ENCODE measurements at regions of chr19 and their contacts with region 1.

Region 1: DNA sequence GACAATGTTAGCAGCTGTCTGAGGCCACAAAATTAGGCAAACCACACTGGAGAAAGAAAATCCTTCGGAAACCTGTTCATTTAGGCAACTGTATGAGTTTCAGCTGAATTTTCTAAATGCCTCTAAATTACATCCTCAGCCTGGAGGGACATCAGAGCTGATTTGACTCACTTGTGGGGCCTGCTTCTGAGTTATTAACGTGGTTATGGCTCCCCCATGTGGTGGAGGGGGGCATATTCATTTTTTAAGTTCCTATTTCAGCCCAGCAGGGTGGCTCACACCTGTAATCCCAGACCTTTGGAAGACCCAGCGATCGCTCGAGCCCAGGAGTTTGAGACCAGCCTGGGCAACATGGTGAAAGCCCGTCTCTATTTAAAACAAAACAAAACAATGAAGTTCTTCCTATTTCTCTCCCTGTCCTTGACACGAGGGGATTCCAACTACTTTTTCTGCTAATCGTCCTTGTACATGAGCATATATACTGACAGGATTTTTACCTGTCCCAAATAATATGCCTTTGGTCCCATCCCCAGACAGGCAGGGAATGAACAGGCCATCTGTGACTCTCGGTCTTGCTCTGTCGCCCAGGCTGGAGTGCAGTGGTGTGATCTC is 31.5 kb upstream of the HIF3A start:
- DNase-seq: peak; percentile 78
- H3K4me3 ChIP-seq: peak overlapping the region in 1 of 2 experiments; percentile 7; a peak in 1 of 4 replicates
- H3K27ac ChIP-seq: no peak overlapping the region
- H3K4me1 ChIP-seq: no peaks in the 10 kb centered on the region
- H3K27me3 ChIP-seq: peaks cover 30% of the 10 kb centered on the region
- CTCF ChIP-seq: peak; percentile 87
- EP300 ChIP-seq: no peak
- RAD21 ChIP-seq: peak; percentile 90

Region 2: DNA sequence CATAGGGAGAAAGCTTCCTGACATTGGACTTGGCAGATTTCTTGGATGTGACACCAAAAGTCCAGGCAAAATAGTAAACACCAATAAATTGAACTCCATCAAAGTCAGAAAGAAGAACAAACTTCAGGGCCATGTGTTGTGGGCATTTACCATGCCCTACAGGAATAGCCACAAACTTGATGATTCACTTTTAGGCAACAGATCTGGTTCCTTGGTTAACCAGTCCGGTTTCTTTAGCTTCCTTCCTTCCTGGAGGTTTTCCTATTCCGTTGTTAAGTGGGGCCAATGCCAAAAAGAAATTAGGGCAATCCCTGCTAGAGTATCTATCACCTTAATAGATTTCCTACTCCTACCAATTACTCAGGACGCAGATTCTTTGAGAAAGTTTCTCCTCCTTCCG is 10.5 kb before region 1 on chr19:
- CTCF ChIA-PET with region 1: interaction called, 23 read pairs
- POLR2A ChIA-PET with region 1: no interaction called
- DNase-seq: no peak
- H3K4me3 ChIP-seq: no peak overlapping the region
- H3K27ac ChIP-seq: no peak overlapping the region
- H3K4me1 ChIP-seq: no peaks in the 10 kb centered on the region
- H3K27me3 ChIP-seq: peaks cover 92% of the 10 kb centered on the region
- CTCF ChIP-seq: no peak
- EP300 ChIP-seq: no peak
- RAD21 ChIP-seq: no peak

Measured in SK-N-SH (cell line).